PC-9 (cell line): ENCODE measurements at regions of chr22 and their contacts with region 1.

Region 1: GRCh38 chr22:40898850-40899357 is 37.0 kb upstream of the DNAJB7 start:
- DNase-seq: peak in 1 of 2 experiments; percentile 67
- H3K4me3 ChIP-seq: no peak overlapping the region
- H3K27ac ChIP-seq: no peak overlapping the region
- H3K4me1 ChIP-seq: no peaks in the 10 kb centered on the region
- H3K27me3 ChIP-seq: no peaks in the 10 kb centered on the region
- CTCF ChIP-seq: peak; percentile 77

Region 2: DNA sequence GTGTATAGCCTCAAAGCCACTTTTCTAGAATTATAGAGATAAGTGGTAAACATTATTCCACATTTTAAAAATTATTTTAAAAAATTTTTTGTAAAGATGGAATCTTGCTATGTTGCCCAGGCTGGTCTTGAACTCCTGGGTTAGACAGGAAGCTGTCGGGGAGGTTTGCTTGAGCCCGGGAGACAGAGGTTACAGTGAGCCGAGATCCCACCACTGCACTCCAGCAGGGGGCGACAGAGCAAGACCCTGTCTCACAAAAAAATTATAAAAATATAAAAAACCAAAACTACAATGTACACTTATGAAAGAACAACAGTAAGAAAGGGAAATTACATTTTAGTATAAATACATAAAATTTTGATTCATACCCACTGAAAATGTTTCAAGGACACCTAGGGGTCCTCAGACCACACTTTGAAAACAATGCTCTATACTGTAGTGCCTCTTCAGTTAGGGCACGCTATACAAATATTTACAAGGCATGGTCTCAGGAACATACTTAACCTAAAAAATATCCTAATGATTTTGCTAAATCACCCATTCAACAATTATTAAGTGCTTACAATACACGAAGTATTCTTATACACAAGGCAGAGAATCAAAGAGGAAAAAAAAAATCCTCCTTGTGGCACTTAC is 373.5 kb before region 1 on chr22:
- CTCF ChIA-PET with region 1: interaction called, 13 read pairs
- POLR2A ChIA-PET with region 1: no interaction called
- intact Hi-C with region 1: no loop called
- DNase-seq: peak in 1 of 2 experiments; percentile 46
- H3K4me3 ChIP-seq: no peak overlapping the region
- H3K27ac ChIP-seq: peak overlapping the region; percentile 16
- H3K4me1 ChIP-seq: peaks cover 28% of the 10 kb centered on the region
- H3K27me3 ChIP-seq: no peaks in the 10 kb centered on the region
- CTCF ChIP-seq: peak; percentile 86

Region 3: DNA sequence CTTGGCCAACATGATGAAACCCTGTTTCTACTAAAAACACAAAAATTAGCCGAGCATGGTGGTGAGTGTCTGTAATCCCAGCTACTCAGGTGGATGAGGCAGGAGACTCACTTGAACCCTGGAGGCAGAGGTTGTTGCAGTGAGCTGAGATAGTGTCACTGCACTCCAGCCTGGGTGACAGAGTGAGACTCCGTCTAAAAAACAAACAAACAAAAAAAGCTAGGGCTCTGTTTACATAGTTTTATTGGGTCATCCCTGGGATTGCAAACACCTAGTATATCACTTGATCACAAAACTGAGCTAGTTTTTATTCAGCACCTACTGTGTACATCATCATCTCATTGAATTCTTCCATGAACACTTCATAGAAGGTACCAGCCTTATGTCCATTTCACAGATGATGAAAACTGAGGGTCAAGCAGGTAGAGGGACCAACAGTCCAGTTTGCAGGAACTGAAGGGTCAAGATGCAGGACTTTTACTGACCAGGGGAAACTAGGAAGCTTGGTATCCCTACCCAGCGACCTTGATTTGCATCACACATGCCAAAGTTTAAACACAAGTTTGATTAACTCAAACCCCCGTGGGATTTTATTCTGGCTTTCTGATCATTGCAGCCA is 253.2 kb before region 1 on chr22:
- CTCF ChIA-PET with region 1: no interaction called
- POLR2A ChIA-PET with region 1: no interaction called
- intact Hi-C with region 1: loop called (anchors 2 kb)
- DNase-seq: no peak
- H3K4me3 ChIP-seq: no peak overlapping the region
- H3K27ac ChIP-seq: no peak overlapping the region
- H3K4me1 ChIP-seq: peaks cover 13% of the 10 kb centered on the region
- H3K27me3 ChIP-seq: no peaks in the 10 kb centered on the region
- CTCF ChIP-seq: no peak

Region 4: DNA sequence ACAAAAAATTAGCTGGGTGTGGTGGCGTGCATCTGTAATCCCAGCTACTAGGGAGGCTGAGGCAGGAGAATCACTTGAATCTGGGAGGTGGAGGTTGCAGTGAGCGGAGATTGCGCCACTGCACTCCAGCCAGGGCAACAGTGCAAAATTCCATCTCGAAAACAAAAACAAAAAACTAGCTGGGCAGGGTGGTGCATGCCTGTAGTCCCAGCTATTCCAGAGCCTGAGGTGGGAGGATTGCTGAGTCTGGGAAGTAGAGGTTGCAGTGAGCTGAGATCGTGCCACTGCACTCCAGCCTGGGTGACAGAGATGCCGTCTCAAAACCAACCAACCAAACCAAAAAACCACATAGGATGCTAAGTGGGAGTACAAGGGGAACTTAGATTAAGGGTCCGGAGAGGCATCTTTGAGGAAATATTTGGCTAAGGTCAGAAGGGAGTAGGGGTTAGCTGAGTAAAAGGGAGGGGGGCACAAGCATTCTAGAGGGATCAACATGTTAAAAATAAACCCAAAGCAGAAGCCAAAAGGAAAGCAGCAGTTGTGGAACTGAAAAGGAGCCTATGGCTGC is 559.3 kb after region 1 on chr22:
- CTCF ChIA-PET with region 1: interaction called, 11 read pairs
- POLR2A ChIA-PET with region 1: no interaction called
- intact Hi-C with region 1: no loop called
- DNase-seq: no peak
- H3K4me3 ChIP-seq: no peak overlapping the region
- H3K27ac ChIP-seq: no peak overlapping the region
- H3K4me1 ChIP-seq: no peaks in the 10 kb centered on the region
- H3K27me3 ChIP-seq: no peaks in the 10 kb centered on the region
- CTCF ChIP-seq: no peak